ENCODE measurements at regions of chr1 and their contacts with region 1.

Region 1: GRCh38 chr1:207811920-207812720 is 60.3 kb downstream of the CD46 start:
- DNase-seq: peak; percentile 38
- ATAC-seq: peak; percentile 31
- H3K4me3 Mint-ChIP-seq: no peak overlapping the region
- H3K27ac Mint-ChIP-seq: no peak overlapping the region
- H3K4me1 Mint-ChIP-seq: peaks cover 42% of the 10 kb centered on the region
- H3K27me3 Mint-ChIP-seq: no peaks in the 10 kb centered on the region

Region 2: GRCh38 chr1:207619871-207620542 is 192.1 kb before region 1 on chr1:
- CTCF ChIA-PET with region 1: no interaction called
- DNase-seq: peak; percentile 42
- ATAC-seq: peak; percentile 83
- H3K4me3 Mint-ChIP-seq: no peak overlapping the region
- H3K27ac Mint-ChIP-seq: no peak overlapping the region
- H3K4me1 Mint-ChIP-seq: no peaks in the 10 kb centered on the region
- H3K27me3 Mint-ChIP-seq: peaks cover 2% of the 10 kb centered on the region

Region 3: GRCh38 chr1:207828485-207829158 is 16.5 kb after region 1 on chr1:
- CTCF ChIA-PET with region 1: interaction called, 11 read pairs
- DNase-seq: peak; percentile 74
- ATAC-seq: peak; percentile 20
- H3K4me3 Mint-ChIP-seq: no peak overlapping the region
- H3K27ac Mint-ChIP-seq: peak overlapping the region; percentile 65
- H3K4me1 Mint-ChIP-seq: peaks cover 95% of the 10 kb centered on the region
- H3K27me3 Mint-ChIP-seq: no peaks in the 10 kb centered on the region

Region 4: DNA sequence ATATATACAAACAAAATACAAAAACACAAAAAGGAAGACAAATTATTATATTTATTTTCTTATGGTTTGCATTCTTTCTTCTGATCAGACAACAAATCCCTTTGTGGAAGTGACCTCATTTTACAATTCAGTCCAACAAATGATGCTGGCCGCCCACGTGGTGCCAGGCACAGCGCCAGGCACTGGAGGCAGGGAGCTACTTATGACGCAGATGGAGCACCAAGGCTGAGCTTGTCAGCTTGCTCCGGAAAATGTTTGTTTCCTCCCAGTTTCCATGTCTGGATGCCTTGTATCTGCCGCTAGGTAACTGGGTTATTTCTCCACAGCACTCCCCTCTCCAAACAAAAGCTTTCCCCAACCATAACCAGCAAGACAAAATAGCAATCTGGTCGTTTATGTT is 129.5 kb after region 1 on chr1:
- CTCF ChIA-PET with region 1: no interaction called
- DNase-seq: no peak
- ATAC-seq: no peak
- H3K4me3 Mint-ChIP-seq: no peak overlapping the region
- H3K27ac Mint-ChIP-seq: no peak overlapping the region
- H3K4me1 Mint-ChIP-seq: no peaks in the 10 kb centered on the region
- H3K27me3 Mint-ChIP-seq: peaks cover 53% of the 10 kb centered on the region